CD4-positive, alpha-beta T cell (primary cell): ENCODE measurements at regions of chr6 and their contacts with region 1.

Region 1: DNA sequence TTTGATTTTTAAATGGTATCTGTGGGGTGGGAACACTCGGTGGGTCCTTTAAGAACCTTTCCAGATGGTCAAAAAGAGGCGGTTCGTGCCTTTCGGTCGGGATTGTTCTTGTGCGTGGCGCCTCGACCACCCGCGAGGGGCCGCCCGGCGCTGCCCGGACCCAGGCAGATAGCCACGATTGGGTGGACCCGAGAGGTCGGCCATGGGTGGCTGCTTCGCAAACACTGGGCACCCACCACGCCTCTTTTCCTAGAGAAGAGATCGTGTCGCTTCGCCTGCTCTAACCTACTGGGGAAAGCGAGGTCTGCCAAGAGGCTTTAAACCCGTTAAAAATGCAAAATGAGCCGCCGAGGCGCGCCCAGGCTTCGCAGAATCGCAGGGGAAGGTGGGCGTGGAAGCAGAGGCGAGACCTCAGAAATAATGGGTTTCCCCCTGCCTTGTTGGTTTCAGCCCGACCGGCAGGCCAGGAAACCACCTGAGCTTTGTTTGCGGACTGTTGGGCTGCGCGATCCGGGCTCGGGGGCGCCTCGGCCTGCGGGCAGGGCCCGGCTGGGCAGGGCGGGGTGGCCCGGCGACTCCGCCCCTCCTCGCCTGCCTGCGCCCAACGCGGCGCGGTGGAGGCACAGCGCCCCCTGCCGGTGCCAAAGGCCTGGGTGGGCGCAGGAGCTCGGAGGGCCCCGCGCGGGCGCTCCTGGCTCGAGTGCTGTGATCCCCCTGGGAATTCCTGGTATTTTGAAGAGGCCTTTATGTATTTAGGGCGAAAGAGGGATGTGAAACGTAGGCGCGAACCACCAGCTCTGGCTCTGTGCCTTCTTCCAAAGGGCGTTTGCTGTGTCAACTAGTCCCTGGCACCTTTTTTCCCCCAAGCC is 1.6 kb downstream of the MARCKS start:
- DNase-seq: peak; percentile 27 to 88 (median 54)
- ATAC-seq: peak; percentile 74
- H3K4me3 ChIP-seq: peak overlapping the region; percentile 50
- H3K4me3 Mint-ChIP-seq: peak overlapping the region; percentile 82
- H3K27ac ChIP-seq: no peak overlapping the region
- H3K27ac Mint-ChIP-seq: no peak overlapping the region
- H3K4me1 ChIP-seq: peaks cover 49% of the 10 kb centered on the region
- H3K4me1 Mint-ChIP-seq: peaks cover 5% of the 10 kb centered on the region
- H3K27me3 ChIP-seq: peaks cover 50 to 57% of the 10 kb centered on the region in 2 experiments
- H3K27me3 Mint-ChIP-seq: peaks cover 42% of the 10 kb centered on the region
- CTCF ChIP-seq: peak; percentile 71

Region 2: DNA sequence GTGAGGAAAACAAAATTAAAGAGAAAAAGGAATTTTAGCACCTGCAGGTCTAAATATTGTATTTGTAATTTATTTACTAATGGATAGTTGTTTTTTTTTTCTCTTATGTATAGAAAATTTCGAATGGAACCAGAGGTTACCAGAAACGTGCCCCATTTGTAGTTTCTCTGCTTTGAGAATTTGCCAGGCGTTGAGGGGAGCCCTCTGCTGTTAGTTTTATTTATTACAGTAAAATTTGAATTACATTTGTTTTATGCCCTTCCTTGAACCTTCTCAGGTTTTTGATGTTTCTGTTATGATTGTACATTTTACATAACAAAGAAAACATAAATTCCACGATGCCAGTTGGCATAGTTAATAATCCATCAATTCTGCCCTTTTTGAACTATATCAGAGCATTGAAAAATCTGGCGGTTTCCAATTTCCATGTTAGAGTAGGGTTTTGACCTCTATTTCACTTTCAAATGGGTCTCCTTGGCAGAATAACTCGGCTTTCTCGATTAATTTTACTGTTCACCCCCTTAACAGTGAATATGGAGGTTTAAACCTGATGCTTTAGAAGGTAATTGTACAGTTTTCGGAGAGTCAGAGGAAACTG is 1546.7 kb before region 1 on chr6:
- CTCF ChIA-PET with region 1: no interaction called
- POLR2A ChIA-PET with region 1: no interaction called
- intact Hi-C with region 1: loop called in 1 of 2 experiments (anchors 10 kb)
- DNase-seq: peak in 3 of 14 experiments; percentile 32 to 38 (median 38)
- ATAC-seq: peak; percentile 34
- H3K4me3 ChIP-seq: no peak overlapping the region
- H3K4me3 Mint-ChIP-seq: no peak overlapping the region
- H3K27ac ChIP-seq: no peak overlapping the region
- H3K27ac Mint-ChIP-seq: no peak overlapping the region
- H3K4me1 ChIP-seq: no peaks in the 10 kb centered on the region
- H3K4me1 Mint-ChIP-seq: no peaks in the 10 kb centered on the region
- H3K27me3 ChIP-seq: peaks cover 0 to 7% of the 10 kb centered on the region in 2 experiments
- H3K27me3 Mint-ChIP-seq: peaks cover 23% of the 10 kb centered on the region
- CTCF ChIP-seq: peak; percentile 58

Region 3: DNA sequence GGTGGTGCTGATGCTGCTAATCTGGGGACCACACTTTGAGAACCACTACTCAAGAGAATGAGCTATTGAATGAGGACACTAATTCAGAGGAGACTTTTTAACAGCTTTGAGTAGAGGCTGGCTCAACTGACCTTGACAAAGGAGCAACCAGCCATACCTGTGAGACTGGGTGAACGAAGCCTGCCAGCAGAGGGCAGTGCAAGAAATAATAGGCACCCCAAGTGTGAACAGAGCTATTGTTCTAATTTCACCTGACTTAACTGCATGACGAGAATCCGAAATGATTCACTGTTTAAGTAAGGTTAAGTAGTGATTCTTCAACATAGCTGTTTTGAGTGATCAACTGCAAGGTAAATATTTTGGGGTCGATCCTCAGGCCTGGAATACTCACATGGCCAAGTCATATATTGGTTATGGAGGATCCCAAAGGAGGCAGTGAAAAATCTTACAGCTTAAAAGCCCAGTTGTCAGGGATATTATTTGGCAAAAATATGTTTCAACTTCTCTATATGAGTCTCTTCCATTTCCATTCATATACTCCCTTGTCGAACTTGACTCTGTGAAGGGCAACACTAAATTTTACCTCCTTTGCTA is 552.1 kb before region 1 on chr6:
- CTCF ChIA-PET with region 1: no interaction called
- POLR2A ChIA-PET with region 1: no interaction called
- intact Hi-C with region 1: loop called (anchors 1 to 2 kb)
- DNase-seq: peak in 11 of 14 experiments; percentile 1 to 51 (median 6)
- ATAC-seq: no peak
- H3K4me3 ChIP-seq: no peak overlapping the region
- H3K4me3 Mint-ChIP-seq: no peak overlapping the region
- H3K27ac ChIP-seq: no peak overlapping the region
- H3K27ac Mint-ChIP-seq: no peak overlapping the region
- H3K4me1 ChIP-seq: no peaks in the 10 kb centered on the region
- H3K4me1 Mint-ChIP-seq: no peaks in the 10 kb centered on the region
- H3K27me3 ChIP-seq: no peaks in the 10 kb centered on the region
- H3K27me3 Mint-ChIP-seq: no peaks in the 10 kb centered on the region
- CTCF ChIP-seq: peak; percentile 24

Region 4: DNA sequence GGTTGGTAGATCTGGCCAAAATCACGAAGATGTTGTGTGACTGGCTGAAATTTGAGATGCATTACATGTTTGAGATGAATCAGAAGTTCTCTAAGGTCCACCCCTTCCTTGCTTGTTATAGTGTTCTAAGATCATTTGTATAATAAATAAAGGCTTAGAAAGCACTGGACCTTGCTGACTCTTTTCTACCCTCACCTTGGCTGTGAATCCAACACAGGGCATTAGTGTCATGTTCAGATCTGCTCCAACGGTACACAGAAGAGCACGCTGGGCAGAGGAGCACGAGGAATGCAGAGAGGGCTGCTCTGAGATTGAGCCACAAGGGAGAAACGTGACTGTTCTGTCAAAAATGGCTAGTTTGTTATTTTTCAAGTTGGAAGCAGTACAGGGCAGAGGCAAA is 281.7 kb after region 1 on chr6:
- CTCF ChIA-PET with region 1: no interaction called
- POLR2A ChIA-PET with region 1: no interaction called
- intact Hi-C with region 1: no loop called
- DNase-seq: no peak
- ATAC-seq: no peak
- H3K4me3 ChIP-seq: no peak overlapping the region
- H3K4me3 Mint-ChIP-seq: no peak overlapping the region
- H3K27ac ChIP-seq: no peak overlapping the region
- H3K27ac Mint-ChIP-seq: no peak overlapping the region
- H3K4me1 ChIP-seq: no peaks in the 10 kb centered on the region
- H3K4me1 Mint-ChIP-seq: no peaks in the 10 kb centered on the region
- H3K27me3 ChIP-seq: no peaks in the 10 kb centered on the region
- H3K27me3 Mint-ChIP-seq: peaks cover 10% of the 10 kb centered on the region
- CTCF ChIP-seq: no peak